Naive thymus-derived CD4-positive, alpha-beta T cell (primary cell): ENCODE measurements at regions of chr1 and their contacts with region 1.

Region 1: DNA sequence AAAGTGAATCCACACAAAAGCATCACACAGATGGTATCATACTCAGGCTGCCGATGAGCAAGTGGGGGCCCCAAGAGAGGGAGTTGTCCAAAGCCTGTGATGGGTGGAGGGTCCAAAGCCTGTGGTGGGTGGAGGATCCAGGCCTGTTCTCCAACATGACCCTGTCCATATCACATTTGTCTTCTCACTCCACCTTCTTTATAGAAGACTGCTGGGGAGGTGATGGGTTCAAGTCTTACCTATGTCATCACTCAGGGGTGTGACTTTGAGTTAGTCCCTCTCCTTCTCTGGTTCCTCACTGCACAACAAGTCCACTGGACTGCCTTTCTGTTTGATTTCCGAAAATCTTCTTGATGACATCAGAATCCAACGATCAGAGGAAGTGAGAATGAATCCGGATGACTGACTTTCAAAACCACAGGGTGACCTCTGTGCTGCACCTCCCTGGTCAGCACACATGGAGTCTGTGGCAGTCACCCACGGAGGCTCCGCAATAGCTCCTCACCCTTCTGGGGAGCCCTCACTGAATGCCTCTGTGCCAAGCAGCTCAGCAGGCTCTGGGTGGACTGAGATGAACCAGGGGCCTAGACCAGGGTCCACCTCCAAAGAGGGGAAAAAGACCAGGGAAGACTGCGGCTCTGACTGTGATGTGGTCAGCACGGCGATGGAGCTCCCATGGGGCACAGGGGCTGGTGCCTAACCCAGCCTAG is 166.8 kb downstream of the HIVEP3 start:
- DNase-seq: no peak
- ATAC-seq: peak; percentile 80
- H3K4me3 ChIP-seq: no peak overlapping the region
- H3K4me3 Mint-ChIP-seq: peak overlapping the region in 6 of 10 donors; percentile 47 to 74 (median 65)
- H3K27ac ChIP-seq: no peak overlapping the region
- H3K27ac Mint-ChIP-seq: peak overlapping the region in 3 of 9 donors; percentile 14 to 84 (median 83)
- H3K4me1 ChIP-seq: peaks cover 31 to 37% of the 10 kb centered on the region in 2 donors
- H3K4me1 Mint-ChIP-seq: peaks cover 23 to 73% (median 46%) of the 10 kb centered on the region in 7 donors
- H3K27me3 ChIP-seq: no peaks in the 10 kb centered on the region
- H3K27me3 Mint-ChIP-seq: no peaks in the 10 kb centered on the region

Region 2: DNA sequence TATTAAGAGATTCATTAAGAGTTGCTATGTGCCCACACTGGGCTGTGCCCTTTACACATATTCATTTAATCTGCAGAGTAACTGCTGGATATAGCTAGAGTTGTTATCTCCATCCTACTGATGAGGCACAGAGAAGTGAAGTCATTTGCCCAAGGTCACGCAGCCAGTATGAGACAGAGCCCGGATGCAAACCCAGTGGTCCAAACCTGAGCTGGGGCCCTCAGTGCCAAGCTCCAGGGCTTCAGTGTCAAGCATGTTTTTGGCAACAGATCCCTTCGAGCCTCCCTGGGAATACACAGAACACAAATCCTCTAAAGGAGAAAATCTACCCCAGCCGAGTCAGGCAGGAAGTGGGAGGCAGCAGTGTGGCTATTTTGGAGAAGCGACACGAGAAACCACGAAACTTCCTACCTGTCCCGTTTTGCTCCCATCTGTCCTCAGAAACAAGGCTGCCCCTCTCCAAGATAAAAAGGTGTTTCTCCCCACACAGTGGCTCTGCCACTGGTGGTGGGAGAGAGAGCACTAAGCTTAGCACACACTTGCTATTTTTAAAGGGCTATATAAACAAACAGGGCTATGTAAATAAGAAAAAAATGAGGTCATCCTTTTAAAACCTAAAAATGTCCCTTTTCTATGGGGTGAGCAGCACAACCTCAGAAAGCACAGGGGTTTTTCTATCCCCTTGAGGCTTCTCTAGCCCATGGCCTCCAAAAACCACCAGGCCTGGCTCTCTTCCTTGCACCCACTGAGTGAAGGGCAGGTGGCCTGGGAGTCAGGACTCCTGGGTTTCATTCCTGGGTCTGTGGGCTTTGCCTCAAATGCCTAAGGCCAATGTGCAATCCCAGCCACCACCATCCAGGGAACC is 128.9 kb before region 1 on chr1:
- CTCF ChIA-PET with region 1: no interaction called
- POLR2A ChIA-PET with region 1: no interaction called
- intact Hi-C with region 1: no loop called
- DNase-seq: peak in 1 of 9 donors; percentile 22
- ATAC-seq: peak; percentile 31
- H3K4me3 ChIP-seq: no peak overlapping the region
- H3K4me3 Mint-ChIP-seq: peak overlapping the region in 5 of 10 donors; percentile 30 to 68 (median 46)
- H3K27ac ChIP-seq: no peak overlapping the region
- H3K27ac Mint-ChIP-seq: peak overlapping the region in 1 of 9 donors; percentile 19
- H3K4me1 ChIP-seq: peaks cover 10 to 11% of the 10 kb centered on the region in 2 donors
- H3K4me1 Mint-ChIP-seq: peaks cover 21 to 49% (median 26%) of the 10 kb centered on the region in 7 donors
- H3K27me3 ChIP-seq: no peaks in the 10 kb centered on the region
- H3K27me3 Mint-ChIP-seq: no peaks in the 10 kb centered on the region

Region 3: GRCh38 chr1:41662061-41662764 is 89.7 kb before region 1 on chr1:
- CTCF ChIA-PET with region 1: interaction called, 3 read pairs
- POLR2A ChIA-PET with region 1: no interaction called
- intact Hi-C with region 1: loop called in 1 of 2 experiments (anchors 5 kb)
- DNase-seq: peak; percentile 47 to 82 (median 60)
- ATAC-seq: peak; percentile 88
- H3K4me3 ChIP-seq: peak overlapping the region; percentile 60
- H3K4me3 Mint-ChIP-seq: peak overlapping the region in 6 of 10 donors; percentile 13 to 93 (median 70)
- H3K27ac ChIP-seq: peak overlapping the region; percentile 61
- H3K27ac Mint-ChIP-seq: peak overlapping the region in 2 of 9 donors; percentile 56 to 84
- H3K4me1 ChIP-seq: peaks cover 25 to 51% of the 10 kb centered on the region in 2 donors
- H3K4me1 Mint-ChIP-seq: peaks cover 42 to 80% (median 66%) of the 10 kb centered on the region in 7 donors
- H3K27me3 ChIP-seq: no peaks in the 10 kb centered on the region
- H3K27me3 Mint-ChIP-seq: no peaks in the 10 kb centered on the region

Region 4: DNA sequence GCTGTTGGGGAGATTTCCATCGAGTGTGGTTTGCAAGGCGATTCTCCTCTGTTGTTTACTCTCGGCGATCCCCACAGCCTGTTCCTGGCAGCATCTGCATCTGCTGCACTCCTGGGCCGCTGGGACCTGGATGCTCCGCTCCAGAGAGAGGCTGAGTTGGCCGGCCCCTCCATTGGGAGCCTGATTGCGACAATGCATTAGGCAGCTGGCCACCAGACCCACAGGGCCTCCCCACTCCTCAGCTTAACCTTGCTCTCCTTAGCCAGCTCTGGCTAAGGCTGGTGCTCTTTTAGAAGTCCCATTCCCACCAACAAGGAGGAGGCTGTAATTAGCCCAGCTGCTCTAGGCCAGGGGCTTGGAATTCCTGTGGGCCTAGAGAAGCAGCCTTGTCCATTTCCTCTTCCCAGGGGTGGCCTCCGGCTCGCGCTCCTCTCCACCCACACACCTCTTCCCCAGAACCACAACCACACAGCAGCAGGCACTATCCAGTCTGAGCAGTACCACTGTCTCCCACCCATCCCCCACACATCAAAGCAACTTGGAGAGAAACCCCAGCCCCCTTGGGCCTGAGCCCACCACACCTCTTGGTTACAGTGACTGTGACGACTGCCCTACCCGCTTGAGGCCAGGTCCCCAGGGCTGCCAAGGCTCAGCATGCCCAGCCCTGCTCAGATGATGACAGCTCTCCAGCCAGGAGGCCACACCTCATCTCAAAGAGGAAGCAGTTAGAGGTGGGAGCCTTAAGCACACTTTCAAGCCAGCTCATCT is 73.7 kb before region 1 on chr1:
- CTCF ChIA-PET with region 1: no interaction called
- POLR2A ChIA-PET with region 1: no interaction called
- intact Hi-C with region 1: loop called in 1 of 2 experiments (anchors 1 kb)
- DNase-seq: no peak
- ATAC-seq: peak; percentile 46
- H3K4me3 ChIP-seq: no peak overlapping the region
- H3K4me3 Mint-ChIP-seq: peak overlapping the region in 2 of 10 donors; percentile 43 to 76
- H3K27ac ChIP-seq: no peak overlapping the region
- H3K27ac Mint-ChIP-seq: peak overlapping the region in 1 of 9 donors; percentile 90
- H3K4me1 ChIP-seq: peaks cover 40 to 49% of the 10 kb centered on the region in 2 donors
- H3K4me1 Mint-ChIP-seq: peaks cover 30 to 92% (median 58%) of the 10 kb centered on the region in 7 donors
- H3K27me3 ChIP-seq: no peaks in the 10 kb centered on the region
- H3K27me3 Mint-ChIP-seq: no peaks in the 10 kb centered on the region

Region 5: GRCh38 chr1:41698916-41699860 is 52.8 kb before region 1 on chr1:
- CTCF ChIA-PET with region 1: no interaction called
- POLR2A ChIA-PET with region 1: no interaction called
- intact Hi-C with region 1: no loop called
- DNase-seq: no peak
- ATAC-seq: peak; percentile 69
- H3K4me3 ChIP-seq: no peak overlapping the region
- H3K4me3 Mint-ChIP-seq: no peak overlapping the region
- H3K27ac ChIP-seq: no peak overlapping the region
- H3K27ac Mint-ChIP-seq: peak overlapping the region in 1 of 9 donors; percentile 64
- H3K4me1 ChIP-seq: peaks cover 0 to 12% of the 10 kb centered on the region in 2 donors
- H3K4me1 Mint-ChIP-seq: peaks cover 0 to 13% (median 0%) of the 10 kb centered on the region in 7 donors
- H3K27me3 ChIP-seq: no peaks in the 10 kb centered on the region
- H3K27me3 Mint-ChIP-seq: no peaks in the 10 kb centered on the region

Region 6: GRCh38 chr1:41728403-41729202 is 23.4 kb before region 1 on chr1:
- CTCF ChIA-PET with region 1: no interaction called
- POLR2A ChIA-PET with region 1: no interaction called
- intact Hi-C with region 1: no loop called
- DNase-seq: peak in 1 of 9 donors; percentile 75
- ATAC-seq: peak; percentile 75
- H3K4me3 ChIP-seq: no peak overlapping the region
- H3K4me3 Mint-ChIP-seq: peak overlapping the region in 2 of 10 donors; percentile 16 to 17
- H3K27ac ChIP-seq: no peak overlapping the region
- H3K27ac Mint-ChIP-seq: peak overlapping the region in 1 of 9 donors; percentile 53
- H3K4me1 ChIP-seq: peaks cover 15 to 27% of the 10 kb centered on the region in 2 donors
- H3K4me1 Mint-ChIP-seq: peaks cover 14 to 45% (median 38%) of the 10 kb centered on the region in 7 donors
- H3K27me3 ChIP-seq: no peaks in the 10 kb centered on the region
- H3K27me3 Mint-ChIP-seq: no peaks in the 10 kb centered on the region

Region 7: DNA sequence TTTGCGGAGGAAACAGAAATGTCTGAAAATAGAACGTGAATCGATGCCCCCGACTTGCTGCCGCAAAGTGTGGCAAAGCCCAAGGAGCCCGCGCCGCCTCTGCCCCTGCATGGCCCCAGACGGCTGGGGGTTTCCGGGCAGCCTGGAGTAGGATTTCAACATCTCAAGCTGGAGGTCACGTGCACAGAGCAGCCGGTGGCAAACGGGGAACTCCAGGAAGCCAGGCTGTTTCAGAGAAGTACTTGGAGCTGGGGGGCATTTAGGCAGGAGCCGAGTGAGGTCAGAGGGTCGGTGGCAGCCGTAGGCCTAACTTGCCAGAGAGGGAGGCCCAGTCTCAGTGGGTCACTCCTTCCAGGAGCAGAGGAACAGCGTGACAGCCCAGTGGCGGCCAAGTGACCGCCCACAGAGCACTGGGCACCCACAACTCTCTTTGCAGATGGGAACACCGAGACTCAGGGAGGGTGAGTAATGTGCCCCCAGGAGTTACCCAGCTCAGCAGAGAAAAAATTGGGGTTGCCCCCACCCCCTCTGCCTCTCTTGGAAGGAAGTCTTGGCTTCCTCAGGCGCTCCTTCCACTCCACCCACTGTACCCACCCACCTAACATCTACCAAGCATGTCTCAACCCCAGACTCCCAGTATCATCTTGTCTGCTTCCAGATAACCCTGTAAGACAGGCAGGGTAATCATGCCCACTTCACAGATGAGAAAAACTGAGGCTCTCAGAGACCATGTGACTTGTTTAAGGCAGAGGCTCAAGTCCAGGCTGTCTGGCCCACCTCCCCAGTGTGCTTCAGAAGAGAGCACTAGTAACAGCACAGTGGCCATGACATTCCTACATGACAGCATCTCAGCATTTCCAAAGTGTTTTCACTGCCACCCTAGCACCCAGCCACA is 12.7 kb before region 1 on chr1:
- CTCF ChIA-PET with region 1: no interaction called
- POLR2A ChIA-PET with region 1: no interaction called
- intact Hi-C with region 1: loop called in 1 of 2 experiments (anchors 1 kb)
- DNase-seq: peak; percentile 10 to 83 (median 36)
- ATAC-seq: peak; percentile 87
- H3K4me3 ChIP-seq: peak overlapping the region; percentile 45
- H3K4me3 Mint-ChIP-seq: peak overlapping the region; percentile 68 to 83 (median 76)
- H3K27ac ChIP-seq: no peak overlapping the region
- H3K27ac Mint-ChIP-seq: peak overlapping the region in 6 of 9 donors; percentile 29 to 94 (median 59)
- H3K4me1 ChIP-seq: peaks cover 23 to 31% of the 10 kb centered on the region in 2 donors
- H3K4me1 Mint-ChIP-seq: peaks cover 23 to 83% (median 39%) of the 10 kb centered on the region in 7 donors
- H3K27me3 ChIP-seq: no peaks in the 10 kb centered on the region
- H3K27me3 Mint-ChIP-seq: no peaks in the 10 kb centered on the region

Region 8: GRCh38 chr1:41783189-41783639 is 31.3 kb after region 1 on chr1:
- CTCF ChIA-PET with region 1: no interaction called
- POLR2A ChIA-PET with region 1: no interaction called
- intact Hi-C with region 1: no loop called
- DNase-seq: peak in 1 of 9 donors; percentile 32
- ATAC-seq: peak; percentile 60
- H3K4me3 ChIP-seq: no peak overlapping the region
- H3K4me3 Mint-ChIP-seq: peak overlapping the region in 1 of 10 donors; percentile 9
- H3K27ac ChIP-seq: no peak overlapping the region
- H3K27ac Mint-ChIP-seq: peak overlapping the region in 4 of 9 donors; percentile 12 to 38 (median 20)
- H3K4me1 ChIP-seq: no peaks in the 10 kb centered on the region
- H3K4me1 Mint-ChIP-seq: peaks cover 0 to 23% (median 13%) of the 10 kb centered on the region in 7 donors
- H3K27me3 ChIP-seq: no peaks in the 10 kb centered on the region
- H3K27me3 Mint-ChIP-seq: no peaks in the 10 kb centered on the region

Region 9: DNA sequence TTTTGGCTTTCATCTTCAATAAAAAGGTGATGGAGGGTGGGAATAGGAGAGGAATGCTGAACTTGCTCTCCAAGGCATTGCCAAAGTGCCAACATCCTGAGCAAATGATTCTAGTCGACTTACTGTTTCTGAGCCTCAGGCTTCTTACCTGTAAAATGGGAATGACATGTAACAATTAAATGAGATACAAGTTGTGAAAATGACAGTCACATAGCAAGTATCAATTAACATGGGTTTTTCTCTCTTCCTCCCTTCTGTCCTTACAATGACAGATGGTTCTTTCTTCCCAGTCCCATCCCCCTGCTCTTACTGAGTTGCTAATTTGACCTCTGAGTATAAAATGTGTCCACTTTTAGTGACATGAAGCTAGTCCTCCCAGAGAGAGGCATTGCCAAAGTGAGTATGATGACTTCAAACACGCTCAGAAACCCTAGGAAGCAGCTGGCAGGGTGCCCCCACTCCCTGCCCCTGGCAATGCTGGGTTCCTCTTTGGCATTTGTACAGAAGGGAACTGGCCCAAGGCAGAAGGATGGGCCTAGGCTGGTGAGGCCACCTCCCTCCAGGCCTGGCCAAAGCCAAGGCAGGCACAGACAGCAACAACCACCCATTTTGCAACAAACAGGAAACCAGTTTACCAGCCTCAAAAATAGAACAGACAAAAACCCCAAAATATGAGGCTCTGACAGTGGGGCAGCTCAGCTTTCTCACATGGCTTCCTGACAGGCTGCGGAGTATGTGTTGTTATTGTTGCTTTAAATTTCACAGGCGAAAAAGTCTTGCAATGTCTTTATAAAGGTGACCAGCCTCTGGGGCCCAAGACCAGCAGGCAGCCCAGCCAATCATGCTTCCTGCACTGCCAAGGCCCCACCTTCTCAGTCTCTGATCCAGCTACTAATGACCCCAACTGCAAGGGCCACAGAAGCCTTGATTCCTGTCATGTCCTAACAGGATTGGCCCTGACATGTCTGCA is 50.9 kb after region 1 on chr1:
- CTCF ChIA-PET with region 1: no interaction called
- POLR2A ChIA-PET with region 1: no interaction called
- intact Hi-C with region 1: loop called in 1 of 2 experiments (anchors 5 kb)
- DNase-seq: peak in 7 of 9 donors; percentile 26 to 51 (median 48)
- ATAC-seq: peak; percentile 85
- H3K4me3 ChIP-seq: peak overlapping the region; percentile 32
- H3K4me3 Mint-ChIP-seq: peak overlapping the region; percentile 6 to 77 (median 62)
- H3K27ac ChIP-seq: peak overlapping the region; percentile 7
- H3K27ac Mint-ChIP-seq: peak overlapping the region; percentile 54 to 92 (median 87)
- H3K4me1 ChIP-seq: peaks cover 50 to 82% of the 10 kb centered on the region in 2 donors
- H3K4me1 Mint-ChIP-seq: peaks cover 59 to 84% (median 73%) of the 10 kb centered on the region in 7 donors
- H3K27me3 ChIP-seq: no peaks in the 10 kb centered on the region
- H3K27me3 Mint-ChIP-seq: no peaks in the 10 kb centered on the region

Region 10: GRCh38 chr1:41868599-41868998 is 116.6 kb after region 1 on chr1:
- CTCF ChIA-PET with region 1: no interaction called
- POLR2A ChIA-PET with region 1: no interaction called
- intact Hi-C with region 1: loop called in 1 of 2 experiments (anchors 5 kb)
- DNase-seq: peak in 1 of 9 donors; percentile 50
- ATAC-seq: peak; percentile 70
- H3K4me3 ChIP-seq: no peak overlapping the region
- H3K4me3 Mint-ChIP-seq: peak overlapping the region in 1 of 10 donors; percentile 44
- H3K27ac ChIP-seq: no peak overlapping the region
- H3K27ac Mint-ChIP-seq: peak overlapping the region in 1 of 9 donors; percentile 5
- H3K4me1 ChIP-seq: peaks cover 0 to 4% of the 10 kb centered on the region in 2 donors
- H3K4me1 Mint-ChIP-seq: peaks cover 4 to 23% (median 7%) of the 10 kb centered on the region in 7 donors
- H3K27me3 ChIP-seq: no peaks in the 10 kb centered on the region
- H3K27me3 Mint-ChIP-seq: no peaks in the 10 kb centered on the region

Region 11: GRCh38 chr1:41898191-41898713 is 146.3 kb after region 1 on chr1:
- CTCF ChIA-PET with region 1: no interaction called
- POLR2A ChIA-PET with region 1: interaction called, 3 read pairs
- intact Hi-C with region 1: loop called (anchors 1 to 5 kb)
- DNase-seq: peak; percentile 31 to 96 (median 89)
- ATAC-seq: peak; percentile 98
- H3K4me3 ChIP-seq: peak overlapping the region; percentile 40
- H3K4me3 Mint-ChIP-seq: peak overlapping the region; percentile 53 to 84 (median 74)
- H3K27ac ChIP-seq: peak overlapping the region; percentile 65
- H3K27ac Mint-ChIP-seq: peak overlapping the region; percentile 87 to 99 (median 95)
- H3K4me1 ChIP-seq: peaks cover 36 to 74% of the 10 kb centered on the region in 2 donors
- H3K4me1 Mint-ChIP-seq: peaks cover 46 to 90% (median 73%) of the 10 kb centered on the region in 7 donors
- H3K27me3 ChIP-seq: no peaks in the 10 kb centered on the region
- H3K27me3 Mint-ChIP-seq: no peaks in the 10 kb centered on the region